Aorta (tissue), 5 donors: ENCODE measurements at regions of chr20 and their contacts with region 1.

Region 1: GRCh38 chr20:36745927-36746659 is at the start of gene NDRG3:
- DNase-seq: peak; percentile 97 to 98
- ATAC-seq: peak; percentile 97
- H3K4me3 ChIP-seq: peak within 1 kb of the TSS; percentile 84 to 99
- H3K27ac ChIP-seq: peak within 1 kb of the TSS; percentile 33 to 91
- H3K4me1 ChIP-seq: no peaks in the 10 kb centered on the region
- H3K27me3 ChIP-seq: no peaks in the 10 kb centered on the region
- total RNA-seq, gene NDRG3: 35.7 to 37.6 TPM

Region 2: GRCh38 chr20:36377352-36378326 is 368.5 kb before region 1 on chr20:
- intact Hi-C with region 1: no loop called
- DNase-seq: no peak
- ATAC-seq: no peak
- H3K4me3 ChIP-seq: no peak overlapping the region
- H3K27ac ChIP-seq: no peak overlapping the region
- H3K4me1 ChIP-seq: no peaks in the 10 kb centered on the region
- H3K27me3 ChIP-seq: peaks cover 0 to 2% of the 10 kb centered on the region in 2 donors

Region 3: DNA sequence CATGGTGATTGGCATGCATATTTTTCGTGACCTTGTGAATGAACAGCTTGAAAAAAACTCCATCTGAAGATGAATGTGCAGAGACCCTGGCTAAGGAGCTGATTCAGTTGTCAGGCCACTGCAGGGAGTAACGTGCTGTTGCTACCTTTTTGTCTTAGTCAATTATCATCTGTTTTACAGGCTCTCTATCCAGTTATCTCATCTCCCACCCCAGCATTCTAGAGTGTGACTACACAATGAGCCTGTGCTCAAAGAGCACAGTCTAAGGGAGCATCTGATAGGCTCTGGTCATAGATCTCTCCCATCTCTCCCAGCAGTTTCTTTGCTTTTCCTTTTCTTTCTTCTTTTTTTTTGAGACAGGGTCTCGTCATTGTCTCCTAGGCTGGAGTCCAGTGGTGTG is 45.7 kb before region 1 on chr20:
- intact Hi-C with region 1: loop called in 1 of 2 experiments (anchors 5 kb)
- DNase-seq: no peak
- ATAC-seq: no peak
- H3K4me3 ChIP-seq: no peak overlapping the region
- H3K27ac ChIP-seq: no peak overlapping the region
- H3K4me1 ChIP-seq: peaks cover 0 to 1% of the 10 kb centered on the region in 2 donors
- H3K27me3 ChIP-seq: no peaks in the 10 kb centered on the region

Region 4: DNA sequence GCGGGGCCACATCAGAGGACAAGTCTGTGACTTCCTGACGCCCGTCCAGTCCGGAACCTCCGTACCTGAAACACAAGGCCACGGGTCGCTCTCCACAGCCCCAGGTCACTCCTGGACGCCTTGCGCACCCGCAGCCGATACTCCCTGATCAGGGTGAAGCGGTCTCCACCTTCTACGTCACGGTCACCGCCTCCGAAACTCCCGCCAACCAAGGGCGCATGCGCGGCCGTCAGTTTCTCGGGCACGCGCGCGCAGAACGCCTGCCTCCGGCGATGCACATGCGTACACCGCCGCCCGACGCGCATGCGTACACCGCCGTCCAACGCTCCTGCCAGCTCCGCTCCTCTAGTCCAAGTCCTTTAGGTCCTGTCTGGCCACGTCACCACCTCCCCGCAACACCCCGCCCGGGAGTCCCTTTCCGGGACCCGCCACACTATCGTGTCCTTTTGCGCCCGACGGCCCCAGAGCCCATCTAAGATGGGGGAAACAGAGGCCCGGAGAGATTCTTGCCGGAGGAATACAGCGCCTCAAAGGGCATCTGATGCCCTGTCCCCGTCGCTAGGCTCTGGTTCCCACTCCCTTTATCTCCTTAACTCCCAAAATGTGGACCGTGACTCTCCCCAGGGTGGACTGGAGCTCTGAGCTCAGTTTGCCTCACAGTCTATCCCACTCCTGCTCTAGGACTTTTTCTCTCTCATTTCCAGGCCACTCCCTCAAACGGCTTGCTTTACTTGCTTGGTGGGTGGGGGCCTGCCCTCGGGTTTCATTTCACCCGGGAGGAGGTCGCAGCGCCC is 27.7 kb after region 1 on chr20 and contains the start of gene DSN1:
- intact Hi-C with region 1: loop called in 1 of 2 experiments (anchors 1 kb)
- DNase-seq: peak; percentile 99
- ATAC-seq: peak; percentile 97
- H3K4me3 ChIP-seq: peak within 1 kb of the TSS; percentile 49 to 68
- H3K27ac ChIP-seq: peak within 1 kb of the TSS; percentile 64 to 81
- H3K4me1 ChIP-seq: no peaks in the 10 kb centered on the region
- H3K27me3 ChIP-seq: no peaks in the 10 kb centered on the region
- total RNA-seq, gene DSN1: 7.1 to 7.7 TPM